Activated CD4-positive, alpha-beta memory T cell treated with anti-CD3 and anti-CD28 coated beads for 36 hours (primary cell): ENCODE measurements at regions of chr3 and their contacts with region 1.

Region 1: GRCh38 chr3:134794950-134795745 is at the start of gene EPHB1:
- DNase-seq: peak; percentile 81
- H3K4me3 Mint-ChIP-seq: peak within 1 kb of the TSS; percentile 77
- H3K27ac Mint-ChIP-seq: no peak within 1 kb of the TSS
- H3K4me1 Mint-ChIP-seq: peaks cover 8% of the 10 kb centered on the region
- H3K27me3 Mint-ChIP-seq: peaks cover 34% of the 10 kb centered on the region
- total RNA-seq, gene EPHB1: 1.3 TPM

Region 2: GRCh38 chr3:134809427-134810051 is 14.4 kb after region 1 on chr3:
- CTCF ChIA-PET with region 1: interaction called, 11 read pairs
- POLR2A ChIA-PET with region 1: interaction called, 4 read pairs
- intact Hi-C with region 1: no loop called
- DNase-seq: no peak
- H3K4me3 Mint-ChIP-seq: no peak overlapping the region
- H3K27ac Mint-ChIP-seq: no peak overlapping the region
- H3K4me1 Mint-ChIP-seq: peaks cover 25% of the 10 kb centered on the region
- H3K27me3 Mint-ChIP-seq: peaks cover 4% of the 10 kb centered on the region

Region 3: DNA sequence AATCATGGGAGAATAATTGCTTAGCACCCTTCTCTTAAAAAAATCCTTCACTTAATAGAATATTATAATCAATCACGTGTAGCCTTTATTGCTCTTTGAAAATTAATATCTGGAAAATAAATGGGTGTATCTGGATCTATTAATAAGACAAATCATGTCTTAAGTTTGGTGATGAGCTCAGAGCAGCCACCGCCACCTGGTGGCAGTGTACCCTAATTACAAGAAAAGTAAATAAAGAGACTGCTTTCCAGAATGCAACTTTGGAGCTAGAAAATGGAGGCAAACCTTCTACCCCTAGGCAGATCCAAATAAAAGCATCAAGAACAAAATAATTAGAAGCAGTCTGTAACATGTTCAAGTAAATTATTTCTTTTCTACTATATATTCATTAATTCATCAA is 43.5 kb after region 1 on chr3:
- CTCF ChIA-PET with region 1: interaction called, 22 read pairs
- POLR2A ChIA-PET with region 1: no interaction called
- intact Hi-C with region 1: loop called (anchors 1 kb)
- DNase-seq: no peak
- H3K4me3 Mint-ChIP-seq: no peak overlapping the region
- H3K27ac Mint-ChIP-seq: no peak overlapping the region
- H3K4me1 Mint-ChIP-seq: no peaks in the 10 kb centered on the region
- H3K27me3 Mint-ChIP-seq: no peaks in the 10 kb centered on the region

Region 4: GRCh38 chr3:134978658-134979057 is 183.5 kb after region 1 on chr3:
- CTCF ChIA-PET with region 1: interaction called, 5 read pairs
- POLR2A ChIA-PET with region 1: no interaction called
- intact Hi-C with region 1: loop called (anchors 10 kb)
- DNase-seq: no peak
- H3K4me3 Mint-ChIP-seq: no peak overlapping the region
- H3K27ac Mint-ChIP-seq: no peak overlapping the region
- H3K4me1 Mint-ChIP-seq: no peaks in the 10 kb centered on the region
- H3K27me3 Mint-ChIP-seq: peaks cover 2% of the 10 kb centered on the region

Region 5: DNA sequence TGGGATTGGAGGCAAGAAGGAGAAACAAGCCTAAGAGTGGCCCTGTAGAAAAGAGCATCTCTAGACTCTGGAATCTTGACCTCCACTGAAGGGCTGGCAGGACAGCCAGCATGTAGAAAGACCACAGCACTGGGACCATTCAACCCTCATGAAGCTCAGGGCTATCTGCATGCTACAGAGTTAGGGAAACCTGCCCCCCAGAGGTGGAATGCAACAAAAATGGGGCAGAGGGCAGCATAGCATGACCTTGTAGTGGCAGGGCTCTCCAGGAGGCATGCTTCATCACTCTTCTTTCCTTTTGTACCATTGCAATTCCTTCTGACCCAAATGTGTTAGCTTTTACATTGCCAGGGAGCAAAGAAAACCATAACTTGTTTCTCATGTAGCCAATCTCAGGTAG is 445.3 kb after region 1 on chr3:
- CTCF ChIA-PET with region 1: interaction called, 3 read pairs
- POLR2A ChIA-PET with region 1: no interaction called
- intact Hi-C with region 1: loop called (anchors 1 kb)
- DNase-seq: no peak
- H3K4me3 Mint-ChIP-seq: no peak overlapping the region
- H3K27ac Mint-ChIP-seq: no peak overlapping the region
- H3K4me1 Mint-ChIP-seq: no peaks in the 10 kb centered on the region
- H3K27me3 Mint-ChIP-seq: no peaks in the 10 kb centered on the region

Region 6: GRCh38 chr3:135503760-135504686 is 708.9 kb after region 1 on chr3:
- CTCF ChIA-PET with region 1: interaction called, 5 read pairs
- POLR2A ChIA-PET with region 1: no interaction called
- intact Hi-C with region 1: loop called (anchors 2 kb)
- DNase-seq: peak; percentile 39
- H3K4me3 Mint-ChIP-seq: no peak overlapping the region
- H3K27ac Mint-ChIP-seq: no peak overlapping the region
- H3K4me1 Mint-ChIP-seq: no peaks in the 10 kb centered on the region
- H3K27me3 Mint-ChIP-seq: peaks cover 3% of the 10 kb centered on the region